ENCODE measurements at regions of chr10 and their contacts with region 1.

Region 1: DNA sequence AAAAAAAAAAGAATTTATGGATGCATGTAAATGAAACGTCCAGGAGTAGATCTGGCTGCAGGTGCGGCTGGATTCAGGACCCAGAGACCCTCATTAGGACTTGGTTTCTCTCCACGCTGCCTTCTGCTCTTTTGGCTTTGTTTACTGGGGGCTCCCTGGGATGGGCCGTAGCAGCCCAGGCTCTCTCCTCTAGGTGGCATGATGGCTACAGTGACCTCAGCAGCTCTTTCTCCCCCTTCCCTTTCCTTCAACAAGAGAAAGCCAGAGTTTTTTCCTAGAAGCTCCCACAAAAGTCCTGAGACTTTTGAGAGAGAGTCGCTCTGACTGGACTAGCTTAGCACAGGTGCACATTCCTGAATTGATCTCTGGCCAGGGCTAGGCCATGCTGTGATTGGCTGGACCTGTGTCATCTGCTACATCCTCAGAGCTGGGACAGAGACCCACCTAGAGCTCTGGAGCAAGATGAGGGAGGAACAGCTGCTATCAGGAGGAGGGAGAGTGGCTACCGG is 67.8 kb upstream of the PDCD4 start:
- DNase-seq: peak; percentile 61
- CTCF ChIP-seq: peak; percentile 85

Region 2: GRCh38 chr10:110629680-110630191 is 174.1 kb before region 1 on chr10:
- in situ Hi-C with region 1: no loop called
- DNase-seq: no peak
- CTCF ChIP-seq: no peak

Region 3: GRCh38 chr10:110871298-110872084 is 67.6 kb after region 1 on chr10 and contains the start of gene PDCD4:
- in situ Hi-C with region 1: loop called (anchors 10 kb)
- DNase-seq: peak; percentile 86
- CTCF ChIP-seq: no peak

Measured in GM13977 (cell line).